HEK293 (cell line): ENCODE measurements at regions of chr11 and their contacts with region 1.

Region 1: DNA sequence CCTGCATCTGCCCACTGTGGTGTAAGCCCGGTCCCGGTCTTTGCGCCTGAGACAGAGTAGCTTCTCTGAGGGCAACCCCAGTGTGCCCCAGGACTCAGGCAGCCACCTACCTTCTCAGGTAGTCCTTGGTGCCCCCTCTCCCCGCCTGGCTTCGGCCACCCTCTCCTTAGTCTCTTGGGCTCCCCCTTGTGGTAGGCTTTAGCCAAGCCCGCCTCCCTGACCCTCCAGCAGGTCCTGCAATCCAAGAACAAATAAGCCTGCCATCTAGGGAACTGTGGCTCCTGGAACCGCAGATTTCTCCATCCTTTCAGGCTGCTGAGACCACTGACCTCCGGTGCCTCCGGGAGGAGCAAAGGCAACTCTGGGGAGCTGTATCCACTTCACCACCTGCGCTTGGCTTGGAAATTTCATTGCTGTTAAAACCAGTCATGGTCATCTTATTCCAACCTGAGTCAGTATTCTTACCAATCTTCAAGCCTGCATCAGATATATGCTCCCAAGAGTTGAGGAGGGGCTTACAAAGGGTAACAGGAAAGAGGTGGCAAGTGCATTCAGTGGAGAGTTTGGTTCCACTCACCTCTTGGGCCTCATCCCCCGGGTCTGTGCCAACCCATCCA is 52.8 kb upstream of the TENM4 start:
- H3K4me3 ChIP-seq: no peak overlapping the region
- H3K27ac ChIP-seq: no peak overlapping the region
- H3K4me1 ChIP-seq: no peaks in the 10 kb centered on the region
- CTCF ChIP-seq: peak; percentile 66

Region 2: DNA sequence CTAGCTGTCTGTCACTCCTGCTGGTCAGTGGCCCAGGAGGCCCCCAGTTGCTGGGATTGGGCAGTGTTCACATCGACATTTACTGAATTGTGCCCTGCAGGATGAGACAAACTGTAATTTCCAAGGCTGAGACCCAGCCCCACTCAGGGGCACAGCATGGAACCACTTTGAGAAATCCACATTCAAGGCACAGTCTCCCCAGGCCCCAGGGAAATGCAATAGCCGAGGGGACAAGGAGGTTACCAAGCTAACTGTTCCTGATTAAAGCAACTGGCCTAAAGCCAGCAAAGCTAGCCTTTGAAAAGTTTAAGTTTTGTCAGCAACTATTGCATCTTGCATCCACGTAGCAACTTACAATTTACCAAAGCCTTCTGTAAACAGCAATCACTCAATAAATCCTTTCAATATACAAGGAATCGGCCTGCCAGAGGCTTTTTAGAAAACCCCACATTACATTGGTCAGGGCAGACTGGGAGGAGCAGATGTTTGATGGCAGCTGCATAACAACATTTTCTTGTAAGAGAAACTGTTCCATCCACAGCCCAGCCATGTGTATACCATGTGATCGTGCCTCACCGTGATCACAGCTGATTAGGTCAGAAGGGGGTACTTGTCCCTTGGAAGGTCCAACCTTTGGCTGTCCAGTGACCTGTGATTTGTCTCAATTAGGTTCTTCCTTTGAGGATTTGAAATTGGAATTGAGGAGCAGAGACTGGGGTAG is 156.7 kb before region 1 on chr11:
- CTCF ChIA-PET with region 1: no interaction called
- POLR2A ChIA-PET with region 1: no interaction called
- H3K4me3 ChIP-seq: no peak overlapping the region
- H3K27ac ChIP-seq: no peak overlapping the region
- H3K4me1 ChIP-seq: no peaks in the 10 kb centered on the region
- CTCF ChIP-seq: no peak

Region 3: DNA sequence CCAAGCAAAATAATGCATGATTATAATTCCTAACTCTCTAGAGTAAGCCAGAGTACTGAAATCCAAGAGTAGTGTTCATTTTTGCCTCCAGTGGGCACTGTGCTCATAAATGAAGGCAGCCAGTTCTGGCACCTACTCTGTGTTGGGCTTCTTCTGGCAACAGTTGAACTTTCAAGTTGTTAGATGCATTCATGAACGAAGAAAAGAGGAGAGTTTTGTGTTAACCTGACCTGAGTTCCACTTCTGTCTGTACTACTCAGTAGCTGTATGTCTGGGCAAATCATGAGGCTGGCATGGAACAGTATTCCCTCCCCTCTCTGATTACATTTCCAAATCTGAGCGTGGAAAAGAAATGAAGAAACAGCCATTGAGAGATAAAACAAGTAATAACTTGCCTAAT is 32.5 kb before region 1 on chr11:
- CTCF ChIA-PET with region 1: interaction called, 10 read pairs
- POLR2A ChIA-PET with region 1: no interaction called
- H3K4me3 ChIP-seq: no peak overlapping the region
- H3K27ac ChIP-seq: no peak overlapping the region
- H3K4me1 ChIP-seq: no peaks in the 10 kb centered on the region
- CTCF ChIP-seq: no peak

Region 4: DNA sequence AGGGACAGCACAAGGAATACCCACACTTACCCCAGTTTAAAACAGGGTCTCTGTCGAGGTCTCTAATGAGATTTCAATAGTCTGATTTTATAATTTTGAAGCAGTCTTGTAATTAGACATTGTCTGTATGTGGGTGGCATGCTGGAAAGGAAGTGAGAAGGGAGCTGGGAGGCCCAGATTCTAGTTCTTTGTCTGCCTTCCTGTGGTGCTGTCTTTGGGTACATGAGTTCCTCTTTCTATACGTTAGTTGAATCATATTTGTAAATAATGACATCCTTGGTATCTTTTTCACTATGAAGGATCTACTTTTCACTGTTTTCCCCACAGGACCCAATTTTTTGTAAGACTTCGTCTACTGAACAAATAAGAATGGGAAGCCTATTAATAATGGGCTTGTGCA is 10.9 kb before region 1 on chr11:
- CTCF ChIA-PET with region 1: interaction called, 26 read pairs
- POLR2A ChIA-PET with region 1: no interaction called
- H3K4me3 ChIP-seq: no peak overlapping the region
- H3K27ac ChIP-seq: no peak overlapping the region
- H3K4me1 ChIP-seq: no peaks in the 10 kb centered on the region
- CTCF ChIP-seq: no peak

Region 5: DNA sequence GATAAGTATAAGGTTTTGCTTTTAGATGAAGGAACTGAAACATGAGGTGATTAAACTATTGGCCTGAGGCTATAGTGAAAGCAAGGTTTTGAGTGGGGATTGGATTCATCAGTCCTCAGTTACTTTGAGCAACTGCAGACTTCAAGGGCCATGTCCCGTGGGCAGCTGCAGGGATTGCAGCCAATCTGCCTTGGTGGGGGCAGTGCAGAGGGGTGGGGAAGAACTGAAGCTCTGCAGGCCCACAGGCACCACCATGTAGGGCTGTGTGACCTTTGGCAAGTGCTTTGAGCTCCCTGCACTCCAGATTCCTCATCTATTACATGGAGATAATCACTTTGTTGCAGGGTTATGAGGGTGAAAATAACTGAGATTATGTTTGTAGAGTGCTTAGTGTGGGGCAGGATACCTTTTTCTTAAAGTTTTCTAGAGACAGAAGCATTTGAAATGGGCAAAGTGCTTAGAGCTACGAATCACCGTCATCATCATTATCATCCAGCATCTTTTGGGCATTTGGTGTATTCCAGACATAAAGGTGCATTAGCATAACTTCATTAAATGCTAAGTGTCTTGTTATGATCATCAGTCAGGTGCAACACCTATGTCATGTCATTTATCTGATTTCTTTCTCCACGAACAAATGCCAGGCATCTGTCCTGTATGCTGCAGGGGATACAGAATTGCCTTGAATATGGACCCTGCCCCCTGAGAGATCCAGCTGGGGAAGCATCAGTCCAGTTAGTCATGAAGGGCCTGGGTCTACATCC is 19.2 kb after region 1 on chr11:
- CTCF ChIA-PET with region 1: interaction called, 10 read pairs
- POLR2A ChIA-PET with region 1: no interaction called
- H3K4me3 ChIP-seq: no peak overlapping the region
- H3K27ac ChIP-seq: no peak overlapping the region
- H3K4me1 ChIP-seq: no peaks in the 10 kb centered on the region
- CTCF ChIP-seq: no peak